H1 (cell line): ENCODE measurements at regions of chr1 and their contacts with region 1.

Region 1: GRCh38 chr1:226121587-226122400 is 59.3 kb downstream of the H3-3A start:
- DNase-seq: peak in 1 of 2 experiments; percentile 89
- H3K4me3 ChIP-seq: peak overlapping the region; percentile 54 to 89 (median 68)
- H3K27ac ChIP-seq: peak overlapping the region; percentile 90; the same call in 1 of the 2 replicates
- H3K4me1 ChIP-seq: peaks cover 4 to 27% (median 14%) of the 10 kb centered on the region in 4 experiments
- H3K27me3 ChIP-seq: peaks cover 0 to 7% (median 4%) of the 10 kb centered on the region in 4 experiments; a peak in 3 of 7 replicates
- CTCF ChIP-seq: peak; percentile 75 to 88 (median 79)
- EP300 ChIP-seq: no peak
- POLR2A ChIP-seq: peak in 1 of 2 experiments; percentile 82; a peak in 1 of 3 replicates
- RAD21 ChIP-seq: peak; percentile 50 to 83

Region 2: DNA sequence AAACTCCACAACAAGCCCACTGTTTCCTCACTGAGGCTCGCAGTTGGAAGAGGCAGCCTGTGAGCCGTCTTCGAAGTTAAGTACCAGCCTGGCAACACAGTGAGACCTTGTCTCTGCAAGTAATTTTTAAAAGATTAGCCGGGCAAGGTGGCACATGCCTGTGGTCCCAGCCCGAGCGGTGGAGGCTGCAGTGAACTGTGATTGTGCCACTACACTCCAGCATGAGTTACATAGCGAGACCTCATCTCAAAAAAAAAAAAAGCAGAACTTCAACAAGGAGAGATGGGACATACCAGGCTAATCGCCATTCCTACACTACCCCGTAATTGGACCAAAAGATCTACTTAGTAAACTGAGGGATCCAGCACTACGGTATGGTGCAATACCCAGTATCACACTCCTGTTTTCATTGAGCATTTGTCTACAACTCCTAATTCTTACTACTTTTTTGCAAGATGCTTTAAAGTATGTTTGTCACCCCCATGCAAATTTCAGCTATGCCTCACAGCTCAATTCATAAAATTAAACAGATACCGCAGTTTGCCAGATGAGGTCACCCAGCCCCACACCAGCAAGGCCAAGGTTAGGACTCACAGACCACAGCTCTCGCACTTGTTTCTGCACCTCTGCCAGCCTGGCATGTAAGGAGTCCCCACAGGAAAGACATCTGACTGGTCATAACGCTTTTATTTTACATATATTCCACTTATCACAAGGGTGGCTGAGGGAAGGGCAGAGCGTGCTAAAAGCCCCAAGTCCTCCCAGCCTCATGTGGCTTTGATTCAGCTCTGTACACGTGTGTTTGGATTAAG is 143.7 kb before region 1 on chr1:
- CTCF ChIA-PET with region 1: no interaction called
- POLR2A ChIA-PET with region 1: no interaction called
- DNase-seq: no peak
- H3K4me3 ChIP-seq: no peak overlapping the region
- H3K27ac ChIP-seq: no peak overlapping the region
- H3K4me1 ChIP-seq: no peaks in the 10 kb centered on the region
- H3K27me3 ChIP-seq: no peaks in the 10 kb centered on the region
- CTCF ChIP-seq: no peak
- EP300 ChIP-seq: no peak
- POLR2A ChIP-seq: no peak
- RAD21 ChIP-seq: no peak

Region 3: GRCh38 chr1:226092965-226093364 is 28.8 kb before region 1 on chr1:
- CTCF ChIA-PET with region 1: interaction called, 11 read pairs
- POLR2A ChIA-PET with region 1: interaction called, 7 read pairs
- DNase-seq: no peak
- H3K4me3 ChIP-seq: no peak overlapping the region
- H3K27ac ChIP-seq: no peak overlapping the region
- H3K4me1 ChIP-seq: peaks cover 0 to 3% (median 1%) of the 10 kb centered on the region in 4 experiments; a peak in 2 of 7 replicates
- H3K27me3 ChIP-seq: no peaks in the 10 kb centered on the region
- CTCF ChIP-seq: no peak
- EP300 ChIP-seq: no peak
- POLR2A ChIP-seq: no peak
- RAD21 ChIP-seq: no peak

Region 4: DNA sequence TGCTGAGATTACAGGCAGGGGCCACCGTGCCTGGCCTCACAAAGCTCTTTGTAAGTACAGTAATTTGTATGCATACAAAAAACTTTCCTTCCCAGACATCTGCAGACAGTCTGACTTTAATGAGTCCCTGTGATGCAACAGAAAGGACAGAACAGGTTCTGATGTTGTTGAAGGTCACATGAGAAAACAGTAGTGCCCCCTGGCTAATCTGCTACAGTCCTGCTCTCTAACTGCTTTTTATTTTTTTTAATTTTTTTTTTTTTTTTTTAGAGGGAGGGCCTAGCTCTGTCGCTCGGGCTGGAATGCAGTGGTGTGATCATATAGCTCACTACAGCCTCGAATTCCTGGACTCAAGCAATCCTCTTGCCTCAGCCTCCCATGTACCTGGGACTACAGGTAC is 28.0 kb after region 1 on chr1:
- CTCF ChIA-PET with region 1: interaction called, 16 read pairs
- POLR2A ChIA-PET with region 1: no interaction called
- DNase-seq: no peak
- H3K4me3 ChIP-seq: no peak overlapping the region
- H3K27ac ChIP-seq: no peak overlapping the region
- H3K4me1 ChIP-seq: no peaks in the 10 kb centered on the region
- H3K27me3 ChIP-seq: no peaks in the 10 kb centered on the region
- CTCF ChIP-seq: peak in 1 of 3 experiments; percentile 3; a peak in 1 of 4 replicates
- EP300 ChIP-seq: no peak
- POLR2A ChIP-seq: no peak
- RAD21 ChIP-seq: no peak

Region 5: GRCh38 chr1:226186124-226187018 is 64.6 kb after region 1 on chr1 and contains the start of gene ACBD3:
- CTCF ChIA-PET with region 1: interaction called, 13 read pairs
- POLR2A ChIA-PET with region 1: interaction called, 4 read pairs
- DNase-seq: peak; percentile 64 to 90
- H3K4me3 ChIP-seq: peak within 1 kb of the TSS; percentile 65 to 90 (median 79)
- H3K27ac ChIP-seq: peak within 1 kb of the TSS; percentile 80; the same call in 1 of the 2 replicates
- H3K4me1 ChIP-seq: peaks cover 0 to 4% (median 3%) of the 10 kb centered on the region in 4 experiments; a peak in 3 of 7 replicates
- H3K27me3 ChIP-seq: no peaks in the 10 kb centered on the region
- CTCF ChIP-seq: no peak
- EP300 ChIP-seq: peak in 1 of 2 experiments; percentile 62; a peak in 1 of 3 replicates
- POLR2A ChIP-seq: peak; percentile 92 to 95
- RAD21 ChIP-seq: peak in 1 of 2 experiments; percentile 23; a peak in 1 of 4 replicates
- total RNA-seq, gene ACBD3: 28.2 and 29.4 TPM in 2 replicates

Region 6: GRCh38 chr1:226223786-226224244 is 102.0 kb after region 1 on chr1:
- CTCF ChIA-PET with region 1: interaction called, 14 read pairs
- POLR2A ChIA-PET with region 1: interaction called, 4 read pairs
- DNase-seq: peak in 1 of 2 experiments; percentile 82
- H3K4me3 ChIP-seq: peak overlapping the region; percentile 34 to 69 (median 60)
- H3K27ac ChIP-seq: no peak overlapping the region
- H3K4me1 ChIP-seq: peaks cover 0 to 7% (median 0%) of the 10 kb centered on the region in 4 experiments; a peak in 3 of 7 replicates
- H3K27me3 ChIP-seq: peaks cover 0 to 23% (median 18%) of the 10 kb centered on the region in 4 experiments; a peak in 6 of 7 replicates
- CTCF ChIP-seq: peak; percentile 23 to 41 (median 34); a peak in 3 of 4 replicates
- EP300 ChIP-seq: no peak
- POLR2A ChIP-seq: no peak
- RAD21 ChIP-seq: peak in 1 of 2 experiments; percentile 0; a peak in 1 of 4 replicates